ENCODE measurements at regions of chr9 and their contacts with region 1.

Region 1: DNA sequence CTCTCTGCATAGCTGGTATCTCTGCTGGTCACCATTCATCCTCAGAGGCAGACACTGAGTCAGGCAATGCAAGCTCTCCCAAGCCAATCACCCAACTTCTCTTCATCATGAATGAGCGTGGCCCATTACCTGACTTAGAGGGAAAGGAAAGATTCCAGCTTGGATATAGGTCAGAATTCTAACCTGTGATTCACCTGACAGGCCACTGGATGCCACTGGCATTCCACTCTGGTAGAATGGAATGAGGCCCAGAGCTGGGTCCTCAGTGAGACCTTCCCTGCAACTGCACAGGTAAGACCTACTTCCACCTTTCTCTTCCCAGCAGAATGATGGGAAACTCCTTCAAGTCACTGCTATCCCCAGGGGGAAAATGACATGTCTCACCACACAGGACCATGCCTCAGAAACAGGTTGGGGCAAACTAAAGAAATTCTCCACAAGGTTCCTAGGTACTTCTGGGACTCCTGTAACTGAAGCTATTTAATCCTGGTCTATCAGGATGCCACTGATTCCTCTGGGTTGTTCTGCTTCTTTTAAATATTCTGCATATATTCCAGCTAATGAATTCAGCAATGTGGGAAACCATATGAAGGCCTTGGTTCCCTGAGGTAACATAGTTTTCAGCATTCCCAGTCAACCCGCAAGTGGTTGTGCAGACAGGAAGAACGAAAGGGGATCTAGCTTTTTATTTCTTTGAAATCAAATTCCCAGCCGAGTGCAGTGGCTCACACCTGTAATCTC is 62.0 kb downstream of the SUSD1 start:
- H3K4me3 ChIP-seq: no peak overlapping the region
- H3K27ac ChIP-seq: no peak overlapping the region
- H3K4me1 ChIP-seq: peaks cover 5% of the 10 kb centered on the region; the same call in 1 of the 2 replicates
- CTCF ChIP-seq: 0 out of 2 replicates have a peak, but pooled peaks have one; percentile 21

Region 2: DNA sequence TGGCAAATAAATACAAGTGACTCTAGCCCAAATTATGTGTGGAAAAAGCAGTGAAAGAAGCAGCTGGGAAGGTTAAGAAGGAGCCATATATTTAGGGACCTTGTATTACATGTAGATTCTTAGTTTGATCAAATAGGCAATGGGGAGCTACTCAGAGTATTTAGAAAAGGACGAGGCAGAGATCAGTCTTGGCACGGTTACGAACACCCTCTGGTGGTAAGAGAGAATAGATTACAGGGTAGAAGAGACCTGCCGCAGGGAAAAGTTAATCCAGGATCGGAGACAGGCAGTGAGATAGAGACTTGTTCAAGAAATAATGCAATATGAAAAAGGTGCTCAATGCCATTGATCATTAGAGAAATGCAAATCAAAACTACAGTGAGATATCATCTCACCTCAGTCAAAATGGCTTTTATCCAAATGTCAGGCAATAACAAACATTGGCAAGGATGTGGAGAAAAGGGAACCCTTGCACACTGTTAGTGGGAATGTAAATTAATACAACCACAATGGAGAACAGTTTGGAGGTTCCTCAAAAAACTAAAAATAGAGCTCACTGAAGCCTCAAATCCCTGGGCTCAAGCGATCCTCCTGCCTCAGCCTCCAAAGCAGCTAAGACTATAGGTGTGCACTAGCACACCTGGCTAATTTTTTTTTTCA is 592.8 kb after region 1 on chr9:
- CTCF ChIA-PET with region 1: interaction called, 10 read pairs
- POLR2A ChIA-PET with region 1: no interaction called
- H3K4me3 ChIP-seq: no peak overlapping the region
- H3K27ac ChIP-seq: no peak overlapping the region
- H3K4me1 ChIP-seq: no peaks in the 10 kb centered on the region
- CTCF ChIP-seq: no peak

Region 3: DNA sequence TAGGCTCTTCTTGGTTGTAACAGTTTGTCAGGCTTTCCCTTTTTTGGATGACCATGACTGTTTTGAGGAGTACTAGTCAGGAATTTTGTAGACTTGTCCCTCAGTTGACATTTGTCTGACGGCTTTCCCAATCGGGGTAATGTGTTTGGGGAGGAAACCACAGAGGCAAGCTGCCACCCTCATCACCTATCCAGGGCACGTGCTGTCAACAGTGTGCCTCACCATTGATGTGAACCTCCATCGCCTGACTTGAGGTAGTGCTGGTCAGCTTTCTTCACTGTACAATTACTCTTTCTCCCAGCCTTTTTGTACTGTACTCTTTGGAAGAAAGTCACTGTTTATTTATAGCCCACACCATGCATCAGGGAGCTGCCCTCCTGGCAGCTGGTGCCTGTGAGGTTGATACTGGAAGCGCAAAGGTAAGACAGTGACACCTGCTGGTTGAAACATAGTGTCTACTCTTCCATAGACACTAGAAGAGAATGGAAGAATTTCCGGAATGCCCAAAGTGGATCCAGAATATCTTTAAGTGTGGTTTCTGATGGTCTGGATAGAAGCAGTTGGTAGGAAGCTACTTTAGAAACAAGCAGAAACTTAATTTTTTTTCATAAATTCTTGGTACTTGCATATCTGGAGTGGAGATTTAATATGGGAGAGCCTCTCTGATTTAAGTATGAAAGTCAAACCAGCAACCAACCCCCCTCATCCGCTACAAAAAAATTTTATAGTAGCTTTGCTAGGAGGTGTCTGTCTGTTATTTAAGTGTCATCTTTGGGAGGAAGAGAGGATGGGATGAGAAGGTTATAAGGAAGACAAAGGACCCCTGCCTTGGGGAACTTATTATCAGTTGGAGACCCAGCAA is 706.8 kb after region 1 on chr9:
- CTCF ChIA-PET with region 1: interaction called, 11 read pairs
- POLR2A ChIA-PET with region 1: no interaction called
- H3K4me3 ChIP-seq: no peak overlapping the region
- H3K27ac ChIP-seq: no peak overlapping the region
- H3K4me1 ChIP-seq: no peaks in the 10 kb centered on the region
- CTCF ChIP-seq: no peak

Measured in HEK293 (cell line).